WTC11 (cell line): ENCODE measurements at regions of chr7 and their contacts with region 1.

Region 1: GRCh38 chr7:99579956-99580777 is 17.9 kb upstream of the TMEM225B start:
- DNase-seq: peak; percentile 81
- ATAC-seq: peak; percentile 81
- H3K4me3 Mint-ChIP-seq: peak overlapping the region; percentile 92
- H3K27ac Mint-ChIP-seq: peak overlapping the region; percentile 93
- H3K4me1 Mint-ChIP-seq: peaks cover 24% of the 10 kb centered on the region
- H3K27me3 Mint-ChIP-seq: no peaks in the 10 kb centered on the region; the same call in 1 of the 2 replicates
- CTCF ChIP-seq: peak; percentile 58; the same call in 1 of the 2 replicates

Region 2: GRCh38 chr7:99597762-99598501 is 17.8 kb after region 1 on chr7 and contains the start of gene TMEM225B:
- CTCF ChIA-PET with region 1: interaction called, 15 read pairs
- POLR2A ChIA-PET with region 1: interaction called, 3 read pairs
- DNase-seq: peak; percentile 24
- ATAC-seq: peak; percentile 14
- H3K4me3 Mint-ChIP-seq: no peak within 1 kb of the TSS
- H3K27ac Mint-ChIP-seq: no peak within 1 kb of the TSS
- H3K4me1 Mint-ChIP-seq: no peaks in the 10 kb centered on the region
- H3K27me3 Mint-ChIP-seq: no peaks in the 10 kb centered on the region; the same call in 1 of the 2 replicates
- CTCF ChIP-seq: no peak
- total RNA-seq, gene TMEM225B: 0.78 to 0.81 TPM (median 0.78 TPM) in 3 replicates

Region 3: GRCh38 chr7:99693427-99694200 is 113.4 kb after region 1 on chr7:
- CTCF ChIA-PET with region 1: no interaction called
- POLR2A ChIA-PET with region 1: no interaction called
- DNase-seq: peak; percentile 62
- ATAC-seq: peak; percentile 96
- H3K4me3 Mint-ChIP-seq: no peak overlapping the region
- H3K27ac Mint-ChIP-seq: peak overlapping the region; percentile 82
- H3K4me1 Mint-ChIP-seq: peaks cover 19% of the 10 kb centered on the region
- H3K27me3 Mint-ChIP-seq: peaks cover 12% of the 10 kb centered on the region; the same call in 1 of the 2 replicates
- CTCF ChIP-seq: no peak